ENCODE measurements at regions of chr7 and their contacts with region 1.

Region 1: DNA sequence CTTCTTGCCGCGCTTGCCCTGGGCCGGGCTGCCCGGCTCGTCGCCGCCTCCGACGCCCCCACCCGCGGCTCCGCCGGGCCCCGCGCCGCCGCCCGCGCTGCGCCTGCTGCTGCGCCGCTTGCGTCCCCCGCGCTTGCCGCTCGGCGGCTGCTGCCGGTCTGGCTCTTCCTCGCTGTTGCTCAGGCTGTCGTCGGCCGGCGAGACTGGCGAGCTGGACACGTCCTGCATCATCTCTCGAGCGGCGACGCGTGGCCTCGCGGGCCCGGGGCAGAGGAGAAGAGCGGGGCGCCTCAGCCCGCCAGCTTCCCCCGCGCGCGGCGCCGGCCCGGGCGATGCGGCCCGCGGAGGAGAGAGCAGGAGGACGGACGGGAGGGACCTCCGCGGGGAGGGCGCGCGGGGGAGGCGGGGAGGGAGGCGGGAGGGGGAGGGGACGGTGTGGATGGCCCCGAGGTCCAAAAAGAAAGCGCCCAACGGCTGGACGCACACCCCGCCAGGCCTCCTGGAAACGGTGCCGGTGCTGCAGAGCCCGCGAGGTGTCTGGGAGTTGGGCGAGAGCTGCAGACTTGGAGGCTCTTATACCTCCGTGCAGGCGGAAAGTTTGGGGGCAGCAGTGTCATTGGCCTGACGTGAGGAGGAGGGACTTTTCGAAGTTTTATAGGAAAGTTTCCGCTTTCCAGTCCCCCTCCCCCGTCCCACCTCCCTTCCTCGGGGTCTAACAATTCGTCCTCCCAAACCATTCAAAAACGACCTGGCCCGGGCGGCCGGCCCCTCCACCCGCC is at the start of gene TWIST1:
- DNase-seq: peak; percentile 94
- ATAC-seq: peak; percentile 73
- H3K4me3 ChIP-seq: peak within 1 kb of the TSS; percentile 99
- H3K27ac ChIP-seq: peak within 1 kb of the TSS; percentile 94
- H3K4me1 ChIP-seq: peaks cover 1% of the 10 kb centered on the region
- H3K27me3 ChIP-seq: no peaks in the 10 kb centered on the region
- CTCF ChIP-seq: no peak
- POLR2A ChIP-seq: peak; percentile 89
- RAD21 ChIP-seq: no peak; the same call in 1 of the 2 replicates
- total RNA-seq, gene TWIST1: 5.4 and 18.6 TPM in 2 replicates

Region 2: GRCh38 chr7:18352339-18353255 is 764.7 kb before region 1 on chr7:
- CTCF ChIA-PET with region 1: no interaction called
- POLR2A ChIA-PET with region 1: no interaction called
- dilution Hi-C with region 1: no loop called
- in situ Hi-C with region 1: loop called (anchors 25 kb)
- intact Hi-C with region 1: loop called (anchors 5 kb)
- DNase-seq: peak; percentile 81
- ATAC-seq: peak; percentile 81
- H3K4me3 ChIP-seq: no peak overlapping the region
- H3K27ac ChIP-seq: no peak overlapping the region
- H3K4me1 ChIP-seq: peaks cover 9% of the 10 kb centered on the region
- H3K27me3 ChIP-seq: no peaks in the 10 kb centered on the region
- CTCF ChIP-seq: peak; percentile 82
- POLR2A ChIP-seq: no peak
- RAD21 ChIP-seq: peak; percentile 86

Region 3: GRCh38 chr7:18693406-18693805 is 423.9 kb before region 1 on chr7:
- CTCF ChIA-PET with region 1: interaction called, 6 read pairs
- POLR2A ChIA-PET with region 1: no interaction called
- dilution Hi-C with region 1: no loop called
- in situ Hi-C with region 1: loop called (anchors 10 kb)
- intact Hi-C with region 1: loop called (anchors 1 kb)
- DNase-seq: peak; percentile 89
- ATAC-seq: peak; percentile 95
- H3K4me3 ChIP-seq: no peak overlapping the region
- H3K27ac ChIP-seq: no peak overlapping the region
- H3K4me1 ChIP-seq: no peaks in the 10 kb centered on the region
- H3K27me3 ChIP-seq: no peaks in the 10 kb centered on the region
- CTCF ChIP-seq: peak; percentile 91
- POLR2A ChIP-seq: 0 out of 2 replicates have a peak, but pooled peaks have one; percentile 26
- RAD21 ChIP-seq: peak; percentile 92

Region 4: DNA sequence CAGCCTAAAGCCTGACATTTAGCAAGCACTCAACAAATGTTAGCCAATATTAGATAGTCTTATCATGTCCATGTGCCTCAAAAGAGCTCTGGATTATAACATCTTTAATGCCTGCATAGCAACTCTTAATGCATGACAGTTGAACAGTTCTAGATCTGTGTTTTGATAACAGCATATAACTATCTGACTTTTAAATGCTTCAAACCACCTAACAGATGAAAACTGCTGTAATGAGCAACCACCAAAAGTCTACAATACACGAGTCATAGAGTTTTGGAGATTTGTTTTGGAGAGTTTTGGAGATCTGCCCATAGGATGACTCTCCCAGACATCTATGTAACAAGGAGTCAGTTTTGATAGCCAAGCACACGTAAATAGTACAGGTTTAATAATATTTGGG is 227.1 kb before region 1 on chr7:
- CTCF ChIA-PET with region 1: no interaction called
- POLR2A ChIA-PET with region 1: no interaction called
- dilution Hi-C with region 1: no loop called
- in situ Hi-C with region 1: no loop called
- intact Hi-C with region 1: loop called (anchors 5 kb)
- DNase-seq: peak; percentile 90
- ATAC-seq: peak; percentile 64
- H3K4me3 ChIP-seq: no peak overlapping the region
- H3K27ac ChIP-seq: no peak overlapping the region
- H3K4me1 ChIP-seq: peaks cover 5% of the 10 kb centered on the region
- H3K27me3 ChIP-seq: no peaks in the 10 kb centered on the region
- CTCF ChIP-seq: no peak
- POLR2A ChIP-seq: no peak
- RAD21 ChIP-seq: no peak

Region 5: GRCh38 chr7:19294619-19295018 is 177.3 kb after region 1 on chr7:
- CTCF ChIA-PET with region 1: no interaction called
- POLR2A ChIA-PET with region 1: no interaction called
- dilution Hi-C with region 1: no loop called
- in situ Hi-C with region 1: no loop called
- intact Hi-C with region 1: loop called (anchors 5 kb)
- DNase-seq: peak; percentile 18
- ATAC-seq: no peak
- H3K4me3 ChIP-seq: no peak overlapping the region
- H3K27ac ChIP-seq: no peak overlapping the region
- H3K4me1 ChIP-seq: no peaks in the 10 kb centered on the region
- H3K27me3 ChIP-seq: no peaks in the 10 kb centered on the region
- CTCF ChIP-seq: no peak
- POLR2A ChIP-seq: no peak
- RAD21 ChIP-seq: no peak

Region 6: DNA sequence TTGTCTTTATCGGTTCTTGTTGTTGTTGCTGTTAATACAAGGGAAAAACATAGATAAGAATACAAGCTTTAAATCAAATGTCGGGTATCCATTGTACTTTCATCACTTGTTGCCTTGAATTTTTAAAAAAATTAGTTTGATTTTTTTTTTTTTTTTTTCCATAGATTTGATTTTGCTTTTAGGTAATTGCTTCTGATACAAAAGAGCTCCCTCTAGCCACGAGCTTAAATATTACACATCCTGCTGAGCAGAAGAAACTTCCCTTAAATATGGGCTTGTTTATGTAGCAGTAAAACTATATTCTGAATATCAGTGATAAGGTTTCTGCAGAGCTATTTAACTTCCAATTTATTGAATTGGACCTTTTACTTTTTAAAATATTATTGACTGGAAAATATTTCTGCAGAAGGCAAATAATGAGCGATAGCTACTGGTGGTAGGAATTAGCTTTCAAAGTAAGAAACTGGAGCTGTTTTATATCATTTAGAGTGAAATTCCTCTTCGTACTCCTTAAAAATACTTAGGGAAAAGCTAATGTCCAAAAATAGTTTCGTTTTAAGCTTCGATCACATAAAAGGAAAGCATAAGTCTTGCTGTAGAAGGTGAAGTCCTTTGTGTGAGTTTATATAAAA is 374.7 kb after region 1 on chr7:
- CTCF ChIA-PET with region 1: interaction called, 3 read pairs
- POLR2A ChIA-PET with region 1: no interaction called
- dilution Hi-C with region 1: no loop called
- in situ Hi-C with region 1: no loop called
- intact Hi-C with region 1: loop called (anchors 2 kb)
- DNase-seq: peak; percentile 66
- ATAC-seq: peak; percentile 64
- H3K4me3 ChIP-seq: no peak overlapping the region
- H3K27ac ChIP-seq: no peak overlapping the region
- H3K4me1 ChIP-seq: no peaks in the 10 kb centered on the region
- H3K27me3 ChIP-seq: no peaks in the 10 kb centered on the region
- CTCF ChIP-seq: peak; percentile 75
- POLR2A ChIP-seq: no peak
- RAD21 ChIP-seq: peak; percentile 55